ENCODE measurements at regions of chr20 and their contacts with region 1.

Region 1: GRCh38 chr20:324177-325044 is 941 bp upstream of the SOX12 start:
- DNase-seq: peak; percentile 91
- H3K4me3 Mint-ChIP-seq: peak overlapping the region; percentile 87
- H3K27ac Mint-ChIP-seq: peak overlapping the region; percentile 88
- H3K4me1 Mint-ChIP-seq: peaks cover 11% of the 10 kb centered on the region
- H3K27me3 Mint-ChIP-seq: no peaks in the 10 kb centered on the region
- CTCF ChIP-seq: peak; percentile 25

Region 2: GRCh38 chr20:290084-290831 is 34.2 kb before region 1 on chr20 and contains the start of gene C20orf96:
- CTCF ChIA-PET with region 1: no interaction called
- POLR2A ChIA-PET with region 1: interaction called, 32 read pairs
- intact Hi-C with region 1: no loop called
- DNase-seq: peak; percentile 93
- H3K4me3 Mint-ChIP-seq: no peak within 1 kb of the TSS
- H3K27ac Mint-ChIP-seq: no peak within 1 kb of the TSS
- H3K4me1 Mint-ChIP-seq: peaks cover 9% of the 10 kb centered on the region
- H3K27me3 Mint-ChIP-seq: no peaks in the 10 kb centered on the region
- CTCF ChIP-seq: peak; percentile 40
- total RNA-seq, gene C20orf96: 2.4 and 3.8 TPM in 2 replicates

Region 3: GRCh38 chr20:309841-310644 is 14.4 kb before region 1 on chr20:
- CTCF ChIA-PET with region 1: interaction called, 5 read pairs
- POLR2A ChIA-PET with region 1: interaction called, 46 read pairs
- intact Hi-C with region 1: loop called (anchors 1 kb)
- DNase-seq: no peak
- H3K4me3 Mint-ChIP-seq: no peak overlapping the region
- H3K27ac Mint-ChIP-seq: no peak overlapping the region
- H3K4me1 Mint-ChIP-seq: peaks cover 18% of the 10 kb centered on the region
- H3K27me3 Mint-ChIP-seq: no peaks in the 10 kb centered on the region
- CTCF ChIP-seq: no peak

Region 4: DNA sequence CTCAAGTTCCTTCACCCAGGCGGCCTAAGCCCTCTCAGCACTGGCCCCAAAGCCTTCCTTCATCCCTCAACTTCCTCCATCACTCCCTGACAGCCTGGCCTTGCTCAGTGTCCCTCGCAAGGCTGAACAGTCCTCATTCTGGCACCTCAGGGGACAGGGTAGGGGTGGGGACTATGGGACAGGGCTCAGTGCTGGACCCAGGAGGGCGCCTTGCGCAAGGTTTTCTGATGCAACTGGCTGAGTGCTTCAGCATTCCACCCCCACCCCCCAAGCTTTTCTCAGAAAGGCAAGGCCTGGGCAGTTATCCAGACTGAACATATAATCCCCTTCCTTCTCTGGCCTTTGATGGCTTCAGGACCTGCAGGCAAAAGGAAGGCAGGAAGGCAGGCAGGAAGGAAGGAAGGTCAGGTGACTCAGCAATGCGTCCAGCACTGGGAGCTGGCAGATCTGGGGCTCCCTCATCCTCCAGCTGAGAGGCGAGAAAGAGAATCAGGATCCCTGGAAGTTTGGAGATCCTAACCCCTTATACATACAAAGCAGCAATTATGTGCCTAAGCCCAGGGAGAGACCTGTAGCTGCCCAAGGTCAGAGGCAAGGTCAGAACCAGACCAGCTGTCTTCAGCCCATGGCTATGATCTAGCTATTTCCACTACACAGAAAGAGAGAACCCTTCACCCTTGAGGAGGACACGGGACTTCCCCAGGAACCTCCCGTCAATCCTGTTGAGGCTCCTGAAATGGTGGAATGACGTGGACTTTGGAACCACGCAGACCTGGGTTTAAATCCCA is 47.5 kb after region 1 on chr20:
- CTCF ChIA-PET with region 1: no interaction called
- POLR2A ChIA-PET with region 1: interaction called, 56 read pairs
- intact Hi-C with region 1: no loop called
- DNase-seq: peak; percentile 100
- H3K4me3 Mint-ChIP-seq: peak overlapping the region; percentile 26
- H3K27ac Mint-ChIP-seq: peak overlapping the region; percentile 95
- H3K4me1 Mint-ChIP-seq: peaks cover 56% of the 10 kb centered on the region
- H3K27me3 Mint-ChIP-seq: no peaks in the 10 kb centered on the region
- CTCF ChIP-seq: no peak

Region 5: DNA sequence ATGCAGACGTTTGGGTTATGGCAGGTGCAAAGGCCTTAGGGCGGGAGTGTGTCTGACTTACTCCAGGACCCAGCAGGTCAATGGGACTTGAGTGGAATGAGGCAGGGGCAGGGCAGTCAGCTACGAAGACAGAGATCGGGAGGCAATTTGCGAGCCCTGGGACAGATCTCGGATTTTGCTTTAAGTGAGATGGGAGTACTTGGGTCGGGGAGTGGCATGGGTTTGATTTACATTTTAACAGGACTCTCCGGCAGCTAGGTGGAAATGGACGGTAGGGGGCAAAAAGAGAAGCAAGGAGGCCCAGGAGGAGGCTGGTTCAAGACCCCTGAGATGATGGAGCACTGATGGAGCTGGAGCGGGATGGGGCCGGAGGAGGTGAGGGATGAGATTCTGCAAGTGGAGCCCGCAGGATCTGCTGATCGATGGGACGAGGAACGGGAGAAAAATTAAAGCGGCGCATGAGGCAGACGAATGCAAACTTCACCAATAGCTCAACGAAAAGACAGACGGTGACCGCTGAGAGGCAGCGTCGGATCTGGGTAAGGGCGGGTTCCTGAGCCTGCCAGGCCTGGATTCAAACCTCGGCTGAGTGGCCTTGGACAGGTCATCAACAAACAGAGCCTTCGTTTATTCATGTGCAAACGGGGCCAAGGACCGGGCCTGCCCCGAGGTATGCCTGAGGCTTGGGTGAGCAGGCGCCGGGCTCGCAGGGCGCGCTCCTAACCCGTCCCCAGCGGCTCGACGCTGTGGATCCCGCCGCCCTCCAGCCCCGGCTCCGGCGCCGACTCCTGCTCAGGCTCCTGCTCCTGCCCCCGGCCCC is 82.9 kb after region 1 on chr20:
- CTCF ChIA-PET with region 1: no interaction called
- POLR2A ChIA-PET with region 1: interaction called, 17 read pairs
- intact Hi-C with region 1: no loop called
- DNase-seq: peak; percentile 76
- H3K4me3 Mint-ChIP-seq: peak overlapping the region; percentile 82
- H3K27ac Mint-ChIP-seq: peak overlapping the region; percentile 30
- H3K4me1 Mint-ChIP-seq: peaks cover 31% of the 10 kb centered on the region
- H3K27me3 Mint-ChIP-seq: no peaks in the 10 kb centered on the region
- CTCF ChIP-seq: peak; percentile 19

Region 6: GRCh38 chr20:543369-544152 is 219.2 kb after region 1 on chr20 and contains the start of gene CSNK2A1:
- CTCF ChIA-PET with region 1: no interaction called
- POLR2A ChIA-PET with region 1: interaction called, 15 read pairs
- intact Hi-C with region 1: no loop called
- DNase-seq: peak; percentile 94
- H3K4me3 Mint-ChIP-seq: peak within 1 kb of the TSS; percentile 77
- H3K27ac Mint-ChIP-seq: peak within 1 kb of the TSS; percentile 99
- H3K4me1 Mint-ChIP-seq: peaks cover 27% of the 10 kb centered on the region
- H3K27me3 Mint-ChIP-seq: no peaks in the 10 kb centered on the region
- CTCF ChIP-seq: no peak
- total RNA-seq, gene CSNK2A1: 271 and 297 TPM in 2 replicates

Measured in MCF 10A (cell line).